CD14-positive monocyte (primary cell): ENCODE measurements at regions of chr6 and their contacts with region 1.

Region 1: DNA sequence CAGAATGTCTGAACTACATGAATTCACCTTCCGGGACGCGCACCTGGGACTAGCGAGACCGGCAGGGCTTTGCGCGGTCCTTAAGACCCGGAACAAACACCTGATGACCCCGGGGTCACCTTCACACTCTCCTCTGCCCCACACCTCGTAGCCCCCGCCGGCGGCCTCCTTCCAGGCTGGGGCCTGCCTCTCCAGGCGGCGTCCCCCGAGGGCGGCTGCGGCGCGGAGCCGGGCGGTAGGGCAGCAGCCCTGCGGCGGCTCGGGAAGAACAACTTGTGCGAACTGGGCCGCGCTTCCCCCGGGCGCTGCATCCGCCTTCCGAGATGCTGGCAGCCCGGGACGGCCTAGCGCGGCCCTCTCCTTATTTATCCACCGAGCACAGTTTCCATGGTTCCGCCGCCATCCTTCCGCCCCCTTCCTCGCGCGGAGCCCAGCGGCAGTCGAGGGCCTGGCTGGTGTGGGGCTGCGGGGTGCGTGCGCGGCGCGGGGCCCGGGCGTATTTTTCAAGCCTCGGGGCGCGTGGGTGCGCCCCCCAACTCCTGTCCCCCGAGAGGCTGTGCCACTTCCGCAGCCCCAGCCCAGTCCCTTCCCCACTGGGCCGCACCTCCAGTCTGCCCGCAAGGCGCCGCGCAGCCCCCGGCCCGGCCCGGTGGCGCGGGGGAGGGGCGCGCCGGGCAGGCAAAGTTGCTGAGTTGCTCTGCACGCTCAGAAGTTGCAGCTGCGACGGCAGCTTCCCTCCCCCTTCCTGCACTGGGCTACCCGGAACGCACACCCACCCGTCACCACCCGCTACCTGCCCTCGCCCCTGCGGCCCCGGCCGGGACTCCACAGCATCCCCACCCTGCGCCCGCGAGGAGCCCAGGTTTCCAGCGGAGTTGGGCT is 56.3 kb upstream of the RREB1 start:
- DNase-seq: peak; percentile 28 to 44 (median 35)
- H3K4me3 ChIP-seq: peak overlapping the region; percentile 76 to 91 (median 83)
- H3K4me3 Mint-ChIP-seq: peak overlapping the region; percentile 81 to 84
- H3K27ac ChIP-seq: peak overlapping the region; percentile 63 to 93
- H3K27ac Mint-ChIP-seq: peak overlapping the region; percentile 18 to 96 (median 80)
- H3K4me1 ChIP-seq: peaks cover 49 to 62% of the 10 kb centered on the region in 2 donors
- H3K4me1 Mint-ChIP-seq: peaks cover 53% of the 10 kb centered on the region
- H3K27me3 ChIP-seq: no peaks in the 10 kb centered on the region
- H3K27me3 Mint-ChIP-seq: peaks cover 0 to 4% (median 2%) of the 10 kb centered on the region in 3 donors
- CTCF ChIP-seq: no peak

Region 2: GRCh38 chr6:6793388-6794250 is 257.9 kb before region 1 on chr6:
- intact Hi-C with region 1: loop called in 1 of 2 experiments (anchors 10 kb)
- DNase-seq: peak; percentile 79 to 93 (median 90)
- H3K4me3 ChIP-seq: peak overlapping the region in 1 of 3 experiments; percentile 29
- H3K4me3 Mint-ChIP-seq: peak overlapping the region; percentile 53 to 74
- H3K27ac ChIP-seq: peak overlapping the region; percentile 50 to 75
- H3K27ac Mint-ChIP-seq: peak overlapping the region; percentile 84 to 99 (median 96)
- H3K4me1 ChIP-seq: peaks cover 60% of the 10 kb centered on the region in 2 donors
- H3K4me1 Mint-ChIP-seq: peaks cover 62% of the 10 kb centered on the region
- H3K27me3 ChIP-seq: no peaks in the 10 kb centered on the region
- H3K27me3 Mint-ChIP-seq: peaks cover 0 to 5% (median 3%) of the 10 kb centered on the region in 3 donors
- CTCF ChIP-seq: no peak

Region 3: GRCh38 chr6:7086488-7086887 is 35.0 kb after region 1 on chr6:
- intact Hi-C with region 1: loop called in 1 of 2 experiments (anchors 5 kb)
- DNase-seq: peak in 2 of 3 donors; percentile 68 to 70
- H3K4me3 ChIP-seq: peak overlapping the region; percentile 50 to 97 (median 91)
- H3K4me3 Mint-ChIP-seq: peak overlapping the region; percentile 77 to 93
- H3K27ac ChIP-seq: peak overlapping the region; percentile 73 to 95
- H3K27ac Mint-ChIP-seq: peak overlapping the region; percentile 80 to 97 (median 94)
- H3K4me1 ChIP-seq: peaks cover 23 to 28% of the 10 kb centered on the region in 2 donors
- H3K4me1 Mint-ChIP-seq: peaks cover 31% of the 10 kb centered on the region
- H3K27me3 ChIP-seq: no peaks in the 10 kb centered on the region
- H3K27me3 Mint-ChIP-seq: no peaks in the 10 kb centered on the region
- CTCF ChIP-seq: peak; percentile 5